ENCODE measurements at regions of chr9 and their contacts with region 1.

Region 1: GRCh38 chr9:121686930-121687541 is 35.6 kb downstream of the DAB2IP start:
- DNase-seq: no peak
- H3K4me3 ChIP-seq: no peak overlapping the region
- CTCF ChIP-seq: peak; percentile 91

Region 2: DNA sequence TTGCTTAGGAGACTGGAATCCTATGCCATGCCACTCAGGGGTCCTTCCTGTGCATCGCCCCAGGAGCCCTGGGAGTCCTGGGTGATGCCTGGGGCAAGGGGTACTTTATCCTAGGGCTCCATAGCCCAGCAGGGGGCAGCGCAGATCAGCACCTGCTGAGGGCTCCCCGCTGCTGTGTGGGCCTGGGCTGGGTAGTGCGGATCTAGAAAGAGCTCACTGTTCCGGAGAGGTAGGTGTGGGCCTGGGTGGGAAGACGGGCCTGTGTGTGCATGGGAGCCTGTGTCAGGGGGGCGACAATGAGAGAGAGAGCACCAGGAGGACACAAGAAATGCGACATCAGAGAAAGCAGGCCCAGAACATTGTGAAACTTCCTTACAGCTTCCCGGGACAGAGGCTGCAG is 47.0 kb before region 1 on chr9:
- CTCF ChIA-PET with region 1: interaction called, 11 read pairs
- POLR2A ChIA-PET with region 1: no interaction called
- DNase-seq: no peak
- H3K4me3 ChIP-seq: no peak overlapping the region
- CTCF ChIP-seq: peak; percentile 45

Region 3: GRCh38 chr9:121698627-121699570 is 11.9 kb after region 1 on chr9:
- CTCF ChIA-PET with region 1: interaction called, 140 read pairs
- POLR2A ChIA-PET with region 1: no interaction called
- DNase-seq: no peak
- H3K4me3 ChIP-seq: peak overlapping the region; percentile 61
- CTCF ChIP-seq: no peak

Region 4: DNA sequence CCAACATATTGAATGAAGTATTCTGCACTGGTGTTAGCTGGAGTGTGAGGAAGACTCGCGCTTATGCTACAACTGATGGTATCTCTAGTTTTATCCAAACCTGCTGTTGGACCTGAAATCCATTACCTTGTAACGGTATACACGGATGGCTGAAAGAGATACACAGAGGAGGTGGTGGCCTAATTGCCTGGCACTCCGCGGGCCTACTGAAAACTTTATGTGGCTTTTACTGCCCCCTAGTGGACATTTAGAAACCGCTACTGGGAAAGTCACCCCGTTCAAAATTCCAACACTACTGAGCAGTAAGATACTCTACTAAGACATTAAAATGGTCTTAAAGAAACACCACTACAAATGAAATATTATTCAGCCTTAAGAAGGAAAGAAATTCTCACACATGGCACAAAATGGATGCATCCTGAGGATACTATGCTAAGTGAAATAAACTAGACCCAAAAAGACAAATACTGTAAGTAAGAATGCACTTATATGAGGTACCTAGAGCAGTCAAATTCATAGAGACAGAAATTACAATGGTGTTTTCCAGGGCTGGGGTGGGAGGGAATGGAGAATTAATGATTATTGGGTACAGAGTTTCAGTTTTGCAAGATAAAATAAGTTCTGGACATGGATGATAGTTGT is 305.7 kb after region 1 on chr9:
- CTCF ChIA-PET with region 1: interaction called, 146 read pairs
- POLR2A ChIA-PET with region 1: no interaction called
- DNase-seq: peak; percentile 21
- H3K4me3 ChIP-seq: no peak overlapping the region
- CTCF ChIP-seq: peak; percentile 55

Region 5: DNA sequence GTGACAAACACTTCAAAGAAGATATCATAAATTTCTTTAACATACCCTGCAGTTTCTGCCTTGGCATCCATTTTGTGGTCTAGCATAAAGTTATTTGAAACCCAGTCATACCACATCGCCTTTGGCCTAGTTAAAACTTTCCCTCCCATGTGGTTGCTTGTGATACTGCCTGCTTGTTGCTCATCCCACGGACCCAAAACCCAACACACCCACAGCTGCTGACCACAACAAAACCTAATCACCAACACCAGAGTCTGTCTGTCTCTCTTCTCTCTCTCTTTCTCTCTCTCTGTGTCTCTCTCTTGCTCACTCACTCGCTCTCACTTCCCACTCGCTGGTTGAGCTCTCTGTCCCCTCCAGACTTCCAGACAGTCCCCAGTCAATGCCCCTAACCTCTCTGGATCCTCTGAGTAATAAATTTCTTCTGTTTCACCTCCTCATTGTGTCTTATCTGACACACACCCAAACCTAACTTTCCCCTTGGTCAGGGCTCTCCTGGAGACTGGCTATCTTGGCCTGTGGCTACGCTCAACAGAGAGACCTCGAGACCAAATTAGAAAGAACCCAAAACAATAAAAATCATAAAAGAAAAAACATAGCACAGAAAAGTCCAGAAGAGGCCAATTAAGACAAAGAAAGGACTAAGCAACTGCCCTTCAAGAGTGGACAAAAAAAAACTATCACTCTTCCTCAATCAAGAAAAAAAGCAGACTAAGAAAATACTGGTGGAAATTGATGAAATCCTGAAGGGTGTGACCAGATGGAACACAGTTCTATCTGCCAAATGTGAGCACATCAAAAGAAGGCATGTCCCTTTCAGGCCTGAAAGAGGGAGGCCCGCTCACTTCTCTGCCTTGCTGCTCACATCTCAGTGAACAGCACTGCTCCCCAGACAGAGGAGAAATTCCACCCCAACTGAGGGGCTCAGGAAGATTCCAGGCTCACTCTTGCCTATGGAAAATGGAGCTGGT is 364.6 kb after region 1 on chr9:
- CTCF ChIA-PET with region 1: no interaction called
- POLR2A ChIA-PET with region 1: no interaction called
- DNase-seq: peak; percentile 41
- H3K4me3 ChIP-seq: no peak overlapping the region
- CTCF ChIP-seq: no peak

Measured in AG04449 (cell line).